ENCODE measurements at regions of chr3 and their contacts with region 1.

Region 1: GRCh38 chr3:192825657-192826200 is 91.9 kb downstream of the MB21D2 start:
- DNase-seq: peak in 1 of 2 donors; percentile 67
- H3K4me3 ChIP-seq: no peak overlapping the region
- H3K27ac ChIP-seq: no peak overlapping the region
- H3K4me1 ChIP-seq: peaks cover 0 to 23% (median 15%) of the 10 kb centered on the region in 4 donors
- H3K27me3 ChIP-seq: no peaks in the 10 kb centered on the region
- CTCF ChIP-seq: peak in 2 of 7 experiments; percentile 7 to 11
- EP300 ChIP-seq: no peak
- POLR2A ChIP-seq: no peak

Region 2: DNA sequence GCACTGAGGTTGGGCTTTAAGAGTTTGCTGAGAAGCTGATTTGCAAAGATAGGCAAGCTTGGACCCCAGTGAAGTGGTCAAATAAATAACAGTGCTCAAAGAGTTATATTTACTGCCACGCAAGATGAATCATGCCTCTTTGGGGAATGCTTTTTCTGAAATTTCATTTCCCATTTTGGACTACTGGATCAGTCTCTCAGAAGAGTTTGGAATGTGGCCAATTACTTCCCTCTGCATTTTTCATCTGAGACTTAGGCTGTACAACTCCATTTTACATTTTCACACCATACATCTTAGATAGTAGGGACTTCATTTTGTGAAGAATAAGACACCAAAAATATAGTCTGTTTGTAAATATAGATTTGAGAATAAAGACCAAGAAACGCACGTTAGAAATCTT is 518.1 kb before region 1 on chr3:
- intact Hi-C with region 1: no loop called
- DNase-seq: peak in 1 of 2 donors; percentile 3
- H3K4me3 ChIP-seq: no peak overlapping the region
- H3K27ac ChIP-seq: no peak overlapping the region
- H3K4me1 ChIP-seq: no peaks in the 10 kb centered on the region
- H3K27me3 ChIP-seq: no peaks in the 10 kb centered on the region
- CTCF ChIP-seq: no peak
- EP300 ChIP-seq: no peak
- POLR2A ChIP-seq: no peak

Region 3: DNA sequence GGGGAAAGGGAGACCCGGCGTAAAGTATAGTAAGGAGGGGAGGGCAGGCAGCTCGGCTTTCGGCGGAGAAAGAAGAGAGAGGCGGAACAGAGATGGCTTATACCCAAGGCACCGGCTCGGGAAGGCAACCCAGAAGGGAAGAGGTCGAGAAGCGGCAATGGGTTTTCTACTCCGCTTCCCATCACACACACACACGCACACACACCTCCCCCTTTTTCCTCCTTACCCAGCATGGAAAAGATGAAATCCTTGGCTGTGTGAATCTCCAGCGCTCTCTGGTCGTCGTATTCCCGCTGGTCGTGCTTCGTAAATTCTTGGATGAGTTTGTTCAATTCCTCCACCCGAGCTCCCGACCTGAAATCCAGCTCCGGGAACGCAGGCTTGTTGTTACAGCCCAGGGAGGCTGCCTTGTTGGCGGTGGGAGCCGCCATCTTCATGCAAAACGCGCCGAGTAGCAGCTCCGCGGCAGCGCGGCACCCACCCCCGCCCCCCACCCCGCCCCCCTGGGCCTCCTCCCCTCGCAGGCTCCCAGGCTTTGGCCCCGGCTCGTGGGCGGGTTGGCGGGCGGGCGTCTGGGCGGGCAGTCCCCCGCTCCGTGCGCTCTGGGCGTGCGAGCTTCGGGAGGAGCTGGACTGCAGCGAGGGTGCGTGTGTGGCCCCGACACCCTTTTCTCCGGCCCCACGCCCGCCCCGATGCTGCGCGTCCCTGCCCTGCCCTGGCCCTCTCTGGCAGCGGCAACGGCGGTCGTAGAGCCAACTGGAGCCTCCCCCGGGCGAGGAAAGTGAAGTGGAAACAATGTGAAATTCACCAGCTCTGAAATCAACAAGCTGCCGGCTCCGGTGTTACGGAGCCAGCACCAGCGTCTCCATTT is 91.9 kb after region 1 on chr3 and contains the start of gene MB21D2:
- intact Hi-C with region 1: loop called (anchors 10 kb)
- DNase-seq: peak; percentile 69 to 94
- H3K4me3 ChIP-seq: peak within 1 kb of the TSS; percentile 63 to 75 (median 73)
- H3K27ac ChIP-seq: peak within 1 kb of the TSS; percentile 82 to 94 (median 91)
- H3K4me1 ChIP-seq: peaks cover 9 to 52% (median 22%) of the 10 kb centered on the region in 4 donors
- H3K27me3 ChIP-seq: peaks cover 0 to 34% (median 0%) of the 10 kb centered on the region in 3 donors
- CTCF ChIP-seq: peak in 1 of 7 experiments; percentile 15
- EP300 ChIP-seq: no peak
- POLR2A ChIP-seq: no peak
- total RNA-seq, gene MB21D2: 0.45 to 15.1 (median 1.8) TPM